ENCODE measurements at regions of chr2 and their contacts with region 1.

Region 1: GRCh38 chr2:71331581-71332434 is at the start of gene ZNF638:
- DNase-seq: peak; percentile 96
- H3K4me3 ChIP-seq: peak within 1 kb of the TSS; percentile 91
- H3K27ac ChIP-seq: peak within 1 kb of the TSS; percentile 54
- H3K4me1 ChIP-seq: peaks cover 14% of the 10 kb centered on the region
- CTCF ChIP-seq: peak; percentile 76
- total RNA-seq, gene ZNF638: 138 and 165 TPM in 2 replicates

Region 2: DNA sequence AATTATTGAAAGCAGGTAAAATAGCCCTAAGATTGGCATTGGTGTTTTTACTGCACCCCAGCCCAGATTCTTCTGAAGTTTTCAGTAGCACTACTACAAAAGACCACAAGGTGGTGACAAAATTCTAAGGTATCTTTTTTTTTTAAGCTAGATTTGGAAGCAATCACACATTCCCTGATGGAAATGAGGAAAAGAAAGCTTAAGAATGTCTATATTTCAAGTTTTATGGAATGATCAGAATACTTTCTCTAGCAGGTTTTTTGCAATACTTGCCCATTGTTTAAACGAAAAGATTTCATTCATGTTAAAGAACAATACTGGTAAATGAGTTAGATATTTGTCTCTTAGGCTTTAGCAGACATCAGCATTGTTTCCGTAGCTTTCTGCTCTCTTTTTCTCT is 32.3 kb before region 1 on chr2:
- CTCF ChIA-PET with region 1: interaction called, 3 read pairs
- POLR2A ChIA-PET with region 1: interaction called, 10 read pairs
- intact Hi-C with region 1: no loop called
- DNase-seq: peak; percentile 45
- H3K4me3 ChIP-seq: no peak overlapping the region
- H3K27ac ChIP-seq: no peak overlapping the region
- H3K4me1 ChIP-seq: no peaks in the 10 kb centered on the region
- CTCF ChIP-seq: peak; percentile 95